Posterior vena cava (tissue), 2 donors: ENCODE measurements at regions of chr13 and their contacts with region 1.

Region 1: DNA sequence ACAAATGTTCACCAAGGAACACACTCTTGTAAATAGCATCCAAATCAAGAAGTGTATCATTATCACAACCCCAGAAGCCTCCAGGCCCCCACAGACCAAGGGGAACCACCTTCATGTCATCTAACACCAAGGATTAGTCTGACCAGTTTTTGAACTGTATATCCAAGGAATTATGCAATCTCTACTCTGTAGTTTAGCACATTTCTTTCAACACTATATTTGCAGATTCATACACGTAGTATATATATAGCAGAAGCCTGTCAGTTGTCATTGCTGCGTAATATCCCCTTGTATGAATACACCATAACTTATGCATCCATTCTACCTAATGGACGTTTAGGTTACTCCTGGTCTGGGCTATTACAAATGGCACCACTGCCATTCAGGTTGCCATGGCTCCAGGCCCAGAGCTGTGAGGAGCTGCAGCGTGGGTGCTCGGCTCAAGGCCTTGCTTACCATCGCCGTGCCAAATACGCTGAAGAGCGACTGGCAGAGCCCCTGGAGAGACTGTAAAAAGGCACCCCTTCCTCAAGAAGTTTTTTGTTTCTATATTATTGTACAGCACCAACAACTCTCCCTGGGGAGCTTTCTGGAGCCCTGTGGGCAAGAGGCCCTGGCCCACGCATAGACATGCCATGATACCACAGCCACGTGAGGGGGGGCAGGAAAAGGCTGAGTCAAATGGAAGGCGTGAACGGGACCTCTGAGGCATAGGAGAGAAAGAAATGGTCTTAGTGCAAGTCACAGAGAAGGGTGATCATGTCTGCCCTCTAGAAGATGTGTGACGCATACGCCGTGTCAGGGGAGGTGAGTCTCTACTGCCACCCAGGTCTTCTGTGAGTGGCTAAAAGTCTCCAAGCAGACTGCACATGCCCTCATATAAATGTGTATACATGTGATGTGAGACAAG is 10.8 kb downstream of the LATS2 start:
- DNase-seq: no peak

Region 2: DNA sequence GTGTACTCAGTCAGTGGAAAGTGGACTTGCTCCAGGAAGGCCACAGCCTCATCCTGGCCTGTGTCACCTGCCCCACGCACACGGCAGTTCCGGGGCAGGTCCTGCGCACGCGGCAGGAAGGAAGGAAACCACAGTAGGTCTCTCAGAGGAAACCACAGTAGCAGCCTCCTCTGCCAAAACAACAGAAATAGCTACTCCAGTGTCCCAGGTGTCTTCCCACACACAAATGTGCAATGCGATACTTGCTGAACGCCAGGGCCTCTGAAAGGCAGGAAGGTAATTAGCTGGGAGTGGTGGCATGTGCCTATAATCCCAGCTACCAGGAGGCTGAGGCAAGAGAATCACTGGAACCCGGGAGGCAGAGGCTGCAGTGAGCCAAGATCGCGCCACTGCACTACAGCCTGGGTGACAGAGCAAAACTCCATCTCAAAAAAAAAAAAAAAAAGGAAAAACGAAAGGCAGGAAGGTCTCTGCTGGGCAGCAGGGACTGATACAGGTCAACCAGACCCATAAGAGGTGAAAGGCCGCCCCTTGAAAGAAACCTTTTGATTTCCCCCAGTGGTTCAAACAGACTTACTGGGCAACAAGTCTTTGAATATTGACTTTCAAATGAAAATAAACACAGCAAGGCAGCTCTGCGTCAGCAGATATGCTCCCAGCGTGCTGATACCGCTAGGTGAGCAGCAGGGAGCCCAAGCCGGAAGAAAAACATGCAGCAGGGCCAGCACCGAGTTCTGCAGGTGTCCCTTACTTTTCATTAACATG is 574.4 kb before region 1 on chr13:
- intact Hi-C with region 1: loop called in 1 of 2 experiments (anchors 5 kb)
- DNase-seq: no peak

Region 3: DNA sequence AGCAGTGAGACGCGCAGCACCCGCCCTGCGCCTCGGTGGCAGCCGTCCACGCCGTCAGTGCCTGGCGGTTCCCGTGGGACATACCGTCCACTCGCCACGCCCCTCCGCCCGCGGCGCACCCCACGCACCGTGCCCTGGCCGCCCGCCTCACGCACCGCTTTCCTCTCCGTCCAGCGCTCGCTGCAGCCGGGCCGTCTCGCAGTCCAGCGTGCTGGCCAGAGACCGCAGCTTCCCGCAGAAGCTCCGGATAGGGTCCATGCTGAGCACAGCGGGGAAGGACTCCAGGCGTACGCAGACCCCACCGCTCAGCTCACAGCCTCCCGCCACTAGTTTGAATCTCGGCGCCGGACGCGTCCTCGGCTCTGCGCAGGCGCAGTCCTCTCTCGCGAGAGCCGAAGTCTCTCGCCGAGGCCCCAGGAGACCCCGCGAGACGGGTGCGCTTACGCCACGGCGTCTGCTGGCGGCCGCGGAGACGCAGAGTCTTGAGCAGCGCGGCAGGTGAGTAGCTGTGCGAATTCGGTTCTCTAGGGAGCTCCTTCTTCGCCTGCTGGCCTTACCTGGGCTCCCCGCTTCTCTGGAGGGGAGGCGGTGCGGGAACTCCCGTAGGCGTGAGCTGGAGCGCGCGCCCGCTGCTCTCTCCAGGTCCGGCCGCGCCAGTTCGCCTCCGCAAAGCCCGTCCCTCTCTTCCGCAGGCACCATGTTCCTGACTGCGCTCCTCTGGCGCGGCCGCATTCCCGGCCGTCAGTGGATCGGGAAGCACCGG is 125.9 kb after region 1 on chr13 and contains the starts of genes MRPL57 and SKA3:
- intact Hi-C with region 1: no loop called
- DNase-seq: peak; percentile 97
- total RNA-seq, gene MRPL57: 10.1 to 11.1 TPM
- total RNA-seq, gene SKA3: 0.86 to 1.7 TPM